AG04450 (cell line): ENCODE measurements at regions of chr3 and their contacts with region 1.

Region 1: GRCh38 chr3:179653096-179653797 is 407 bp downstream of the USP13 start:
- DNase-seq: peak; percentile 61
- H3K4me3 ChIP-seq: peak overlapping the region; percentile 84
- H3K27ac ChIP-seq: peak overlapping the region; percentile 91
- H3K27me3 ChIP-seq: no peaks in the 10 kb centered on the region
- CTCF ChIP-seq: peak; percentile 19; the same call in 1 of the 2 replicates

Region 2: GRCh38 chr3:179488213-179488612 is 165.0 kb before region 1 on chr3:
- CTCF ChIA-PET with region 1: no interaction called
- POLR2A ChIA-PET with region 1: no interaction called
- DNase-seq: no peak
- H3K4me3 ChIP-seq: no peak overlapping the region
- H3K27ac ChIP-seq: no peak overlapping the region
- H3K27me3 ChIP-seq: no peaks in the 10 kb centered on the region
- CTCF ChIP-seq: no peak

Region 3: GRCh38 chr3:179642871-179643270 is 10.4 kb before region 1 on chr3:
- CTCF ChIA-PET with region 1: interaction called, 14 read pairs
- POLR2A ChIA-PET with region 1: no interaction called
- DNase-seq: no peak
- H3K4me3 ChIP-seq: no peak overlapping the region
- H3K27ac ChIP-seq: no peak overlapping the region
- H3K27me3 ChIP-seq: no peaks in the 10 kb centered on the region
- CTCF ChIP-seq: no peak

Region 4: GRCh38 chr3:179898024-179898423 is 244.8 kb after region 1 on chr3:
- CTCF ChIA-PET with region 1: no interaction called
- POLR2A ChIA-PET with region 1: no interaction called
- DNase-seq: peak; percentile 3
- H3K4me3 ChIP-seq: no peak overlapping the region
- H3K27ac ChIP-seq: no peak overlapping the region
- H3K27me3 ChIP-seq: no peaks in the 10 kb centered on the region
- CTCF ChIP-seq: no peak